Endothelial cell of umbilical vein (primary cell): ENCODE measurements at regions of chr14 and their contacts with region 1.

Region 1: GRCh38 chr14:92513974-92514692 is 552 bp downstream of the RIN3 start:
- DNase-seq: peak; percentile 34
- H3K4me3 ChIP-seq: peak overlapping the region; percentile 62 to 76 (median 67)
- H3K27ac ChIP-seq: peak overlapping the region; percentile 60
- H3K4me1 ChIP-seq: peaks cover 21% of the 10 kb centered on the region
- H3K27me3 ChIP-seq: no peaks in the 10 kb centered on the region
- CTCF ChIP-seq: no peak
- POLR2A ChIP-seq: no peak

Region 2: DNA sequence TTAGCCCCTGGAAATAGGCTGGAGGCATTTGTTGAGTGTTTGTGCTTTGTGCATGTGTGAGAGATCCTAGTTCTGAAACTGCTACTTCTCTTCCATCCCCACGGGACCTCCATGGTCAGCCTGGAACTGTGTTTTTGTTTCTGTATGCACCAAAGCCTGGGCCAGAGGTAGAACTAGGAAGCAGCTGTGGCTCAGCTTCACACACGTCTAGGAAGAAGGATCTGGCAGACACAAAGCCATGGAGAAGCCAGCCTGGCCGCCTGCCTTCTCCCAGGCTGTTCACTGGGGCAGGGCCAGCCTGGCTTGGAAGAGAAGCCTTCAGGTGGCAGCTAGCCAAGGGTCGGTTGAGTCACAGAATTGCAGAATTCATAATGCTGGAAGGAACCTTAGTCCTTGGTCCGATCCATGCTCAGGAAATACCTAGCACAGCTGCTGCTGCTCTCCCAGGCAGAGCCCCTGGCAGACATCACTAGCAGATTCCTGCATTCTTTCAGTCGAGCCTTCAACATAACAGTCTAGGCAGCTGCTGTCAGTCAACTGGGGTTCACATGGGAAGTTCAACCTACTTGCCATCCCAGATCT is 26.4 kb after region 1 on chr14:
- CTCF ChIA-PET with region 1: interaction called, 3 read pairs
- POLR2A ChIA-PET with region 1: interaction called, 3 read pairs
- dilution Hi-C with region 1: no loop called
- intact Hi-C with region 1: loop called (anchors 1 kb)
- DNase-seq: peak; percentile 99
- H3K4me3 ChIP-seq: no peak overlapping the region
- H3K27ac ChIP-seq: peak overlapping the region; percentile 98
- H3K4me1 ChIP-seq: peaks cover 24% of the 10 kb centered on the region
- H3K27me3 ChIP-seq: no peaks in the 10 kb centered on the region
- CTCF ChIP-seq: no peak
- POLR2A ChIP-seq: peak; percentile 72

Region 3: DNA sequence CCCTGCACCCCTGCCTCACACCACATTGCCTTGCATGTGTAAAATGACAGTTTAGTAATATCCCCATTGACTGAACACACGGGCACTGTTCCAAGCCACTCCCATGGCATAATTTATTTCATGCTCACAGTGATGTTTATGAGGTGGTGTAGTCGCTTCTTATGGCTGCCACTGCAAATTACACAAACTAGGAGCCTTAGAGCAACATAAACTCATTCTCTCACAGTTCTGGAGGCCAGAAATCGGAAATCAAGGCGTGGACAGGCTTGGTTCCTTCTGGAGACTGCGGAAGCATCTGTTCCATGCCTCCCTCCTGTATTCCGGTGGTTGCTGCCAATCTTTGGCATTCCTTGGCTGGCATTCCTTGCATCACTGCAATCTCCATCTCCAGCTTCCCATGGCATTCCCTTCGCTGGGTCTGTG is 96.7 kb after region 1 on chr14:
- CTCF ChIA-PET with region 1: no interaction called
- POLR2A ChIA-PET with region 1: no interaction called
- dilution Hi-C with region 1: no loop called
- intact Hi-C with region 1: loop called (anchors 1 kb)
- DNase-seq: peak; percentile 52
- H3K4me3 ChIP-seq: no peak overlapping the region
- H3K27ac ChIP-seq: peak overlapping the region; percentile 70
- H3K4me1 ChIP-seq: peaks cover 6% of the 10 kb centered on the region
- H3K27me3 ChIP-seq: no peaks in the 10 kb centered on the region
- CTCF ChIP-seq: no peak
- POLR2A ChIP-seq: no peak

Region 4: DNA sequence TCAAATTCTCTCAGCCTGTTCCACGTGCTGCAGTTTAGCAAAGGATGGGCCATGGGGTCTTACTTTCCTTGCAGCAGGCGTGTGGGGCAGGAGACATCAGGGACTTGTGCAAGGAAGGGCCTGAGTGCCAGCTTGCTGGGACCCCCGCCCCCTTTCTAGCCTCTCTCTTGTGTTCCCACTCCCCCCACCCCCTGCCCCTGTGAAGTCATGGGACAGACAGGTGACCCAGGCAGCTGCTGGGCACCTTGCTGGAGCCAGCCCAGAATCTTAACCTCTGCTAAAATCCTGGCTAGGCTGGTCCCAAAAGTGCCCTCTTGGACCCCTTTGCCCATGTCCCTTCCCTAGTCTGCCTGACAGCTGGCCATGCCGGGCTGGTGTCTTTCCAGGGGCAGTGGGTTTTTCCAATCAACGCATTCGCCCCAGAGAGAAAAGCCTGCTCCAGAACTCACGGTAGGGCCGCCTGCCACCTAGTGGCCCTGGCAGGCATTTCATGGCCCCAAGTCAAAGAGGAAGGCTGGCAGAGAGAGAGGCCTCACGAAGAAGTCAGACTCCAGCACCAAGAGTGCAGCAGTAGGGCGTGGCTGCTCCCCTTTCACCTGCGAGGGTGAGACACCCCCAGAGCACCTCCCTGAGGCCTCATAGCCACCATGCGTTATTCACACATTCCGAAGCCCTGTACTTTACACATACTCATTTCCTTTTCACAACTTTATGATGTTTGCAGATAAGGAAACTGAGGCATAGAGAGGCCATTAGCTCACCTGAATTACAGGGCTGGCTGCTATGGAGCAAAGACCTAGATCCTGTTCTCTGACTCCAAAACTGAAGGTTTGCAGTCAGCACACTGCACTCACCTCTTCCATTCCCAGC is 166.9 kb after region 1 on chr14:
- CTCF ChIA-PET with region 1: no interaction called
- POLR2A ChIA-PET with region 1: no interaction called
- dilution Hi-C with region 1: no loop called
- intact Hi-C with region 1: loop called (anchors 1 kb)
- DNase-seq: peak; percentile 71
- H3K4me3 ChIP-seq: no peak overlapping the region
- H3K27ac ChIP-seq: no peak overlapping the region
- H3K4me1 ChIP-seq: peaks cover 4% of the 10 kb centered on the region
- H3K27me3 ChIP-seq: no peaks in the 10 kb centered on the region
- CTCF ChIP-seq: peak; percentile 89 to 94
- POLR2A ChIP-seq: no peak

Region 5: GRCh38 chr14:93431036-93431670 is 917.0 kb after region 1 on chr14:
- CTCF ChIA-PET with region 1: no interaction called
- POLR2A ChIA-PET with region 1: no interaction called
- dilution Hi-C with region 1: no loop called
- intact Hi-C with region 1: no loop called
- DNase-seq: no peak
- H3K4me3 ChIP-seq: no peak overlapping the region
- H3K27ac ChIP-seq: no peak overlapping the region
- H3K4me1 ChIP-seq: no peaks in the 10 kb centered on the region
- H3K27me3 ChIP-seq: peaks cover 5 to 7% of the 10 kb centered on the region in 2 experiments
- CTCF ChIP-seq: no peak
- POLR2A ChIP-seq: no peak